ENCODE measurements at regions of chr4 and their contacts with region 1.

Region 1: DNA sequence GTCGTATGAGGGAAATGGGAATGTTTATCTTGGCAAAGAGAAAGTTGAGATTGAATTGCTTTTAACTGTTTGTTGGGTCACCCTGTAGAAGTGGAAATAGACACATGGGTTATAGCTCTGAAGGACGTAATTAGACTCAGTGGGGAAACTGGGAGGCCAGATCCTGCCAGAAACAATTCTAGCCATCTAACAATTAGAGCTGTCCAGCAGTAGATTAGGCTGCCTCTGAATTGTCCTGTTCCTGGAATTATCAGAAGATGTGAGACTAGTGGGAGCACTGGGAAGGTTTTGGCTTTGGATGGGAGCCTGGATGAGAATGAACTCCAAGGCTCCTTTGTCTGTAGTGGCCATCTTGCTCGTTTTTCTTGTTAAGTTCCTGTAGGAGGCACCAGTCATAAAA is 61.9 kb upstream of the IGFBP7 start:
- DNase-seq: no peak
- H3K4me3 ChIP-seq: no peak overlapping the region
- H3K27ac ChIP-seq: no peak overlapping the region
- H3K4me1 ChIP-seq: no peaks in the 10 kb centered on the region
- H3K27me3 ChIP-seq: no peaks in the 10 kb centered on the region
- CTCF ChIP-seq: no peak

Region 2: GRCh38 chr4:57319878-57320616 is 148.0 kb after region 1 on chr4:
- intact Hi-C with region 1: loop called (anchors 10 kb)
- DNase-seq: no peak
- H3K4me3 ChIP-seq: no peak overlapping the region
- H3K27ac ChIP-seq: no peak overlapping the region
- H3K4me1 ChIP-seq: no peaks in the 10 kb centered on the region
- H3K27me3 ChIP-seq: no peaks in the 10 kb centered on the region
- CTCF ChIP-seq: no peak